Testis (tissue), 5 donors: ENCODE measurements at regions of chr3 and their contacts with region 1.

Region 1: DNA sequence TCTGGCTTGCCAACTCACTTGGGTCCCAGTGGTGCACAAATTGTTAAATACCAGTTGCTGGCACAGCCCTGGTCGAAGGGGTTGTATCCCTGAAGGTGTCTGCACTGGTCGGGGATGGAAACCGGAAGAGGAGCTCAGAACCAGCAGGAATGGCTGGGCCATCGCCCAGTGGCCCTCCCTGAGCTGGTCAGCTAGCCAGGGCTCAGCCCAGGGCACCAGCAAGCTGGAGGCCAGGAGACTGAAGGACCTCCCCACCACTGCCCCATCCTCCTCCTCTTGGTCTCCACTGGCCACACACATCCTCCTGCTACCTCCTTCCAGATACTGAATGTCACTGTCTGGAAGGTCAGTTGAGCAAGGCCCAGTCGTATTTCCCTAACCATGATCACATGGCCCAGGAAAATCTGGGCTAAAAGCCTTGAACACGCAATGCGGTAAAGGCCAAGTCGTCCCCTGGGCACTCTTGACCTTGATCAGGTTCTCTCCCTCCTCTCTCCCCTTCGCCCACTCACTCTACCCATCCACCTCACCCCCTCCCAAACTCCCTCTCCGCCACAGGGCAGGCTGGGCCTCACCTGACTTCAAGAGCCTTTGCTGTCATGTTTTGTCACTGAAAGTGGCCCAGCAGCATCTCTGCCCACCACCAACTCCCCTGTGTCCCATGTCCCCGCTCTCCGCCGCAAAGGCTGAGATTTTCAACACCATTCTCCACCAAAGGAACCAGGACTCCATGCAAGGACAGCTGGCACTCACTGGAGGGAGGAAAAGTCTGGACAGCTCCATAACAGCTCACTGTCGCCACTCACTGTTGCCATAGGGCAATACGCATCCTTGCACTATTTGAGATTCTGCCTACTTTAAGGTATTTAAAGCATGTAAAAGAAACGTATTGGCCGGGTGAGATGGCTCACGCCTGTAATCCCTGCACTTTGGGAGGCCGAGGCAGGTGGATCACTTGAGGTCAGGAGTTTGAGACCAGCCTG is 12.1 kb downstream of the ZDHHC19 start:
- DNase-seq: no peak
- H3K4me3 ChIP-seq: no peak overlapping the region
- H3K27ac ChIP-seq: peak overlapping the region; percentile 39 to 61
- H3K4me1 ChIP-seq: peaks cover 27% of the 10 kb centered on the region
- H3K27me3 ChIP-seq: no peaks in the 10 kb centered on the region
- CTCF ChIP-seq: no peak
- POLR2A ChIP-seq: no peak

Region 2: DNA sequence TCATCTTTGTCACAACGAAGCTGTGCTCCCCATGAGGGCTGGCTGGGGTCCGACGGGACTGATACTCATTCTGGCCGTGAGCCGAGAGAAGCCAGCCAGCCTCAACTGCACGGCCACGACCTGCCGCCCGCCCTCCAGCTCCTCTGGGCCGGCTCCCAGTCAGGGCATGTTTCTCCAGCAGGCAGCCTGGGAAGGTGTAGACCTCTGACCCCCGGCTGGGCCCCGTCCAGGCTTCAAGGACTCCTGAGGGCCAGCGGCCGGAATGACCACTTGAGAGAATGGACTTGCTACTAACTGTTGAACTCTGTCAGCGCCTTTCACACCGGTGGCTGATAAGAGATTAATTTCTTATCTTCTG is 369.2 kb before region 1 on chr3:
- intact Hi-C with region 1: no loop called
- DNase-seq: no peak
- H3K4me3 ChIP-seq: no peak overlapping the region
- H3K27ac ChIP-seq: no peak overlapping the region
- H3K4me1 ChIP-seq: no peaks in the 10 kb centered on the region
- H3K27me3 ChIP-seq: no peaks in the 10 kb centered on the region
- CTCF ChIP-seq: no peak
- POLR2A ChIP-seq: no peak

Region 3: GRCh38 chr3:196079682-196080081 is 119.4 kb before region 1 on chr3:
- intact Hi-C with region 1: loop called (anchors 5 kb)
- DNase-seq: no peak
- H3K4me3 ChIP-seq: no peak overlapping the region
- H3K27ac ChIP-seq: no peak overlapping the region
- H3K4me1 ChIP-seq: peaks cover 18% of the 10 kb centered on the region
- H3K27me3 ChIP-seq: no peaks in the 10 kb centered on the region
- CTCF ChIP-seq: no peak
- POLR2A ChIP-seq: no peak

Region 4: DNA sequence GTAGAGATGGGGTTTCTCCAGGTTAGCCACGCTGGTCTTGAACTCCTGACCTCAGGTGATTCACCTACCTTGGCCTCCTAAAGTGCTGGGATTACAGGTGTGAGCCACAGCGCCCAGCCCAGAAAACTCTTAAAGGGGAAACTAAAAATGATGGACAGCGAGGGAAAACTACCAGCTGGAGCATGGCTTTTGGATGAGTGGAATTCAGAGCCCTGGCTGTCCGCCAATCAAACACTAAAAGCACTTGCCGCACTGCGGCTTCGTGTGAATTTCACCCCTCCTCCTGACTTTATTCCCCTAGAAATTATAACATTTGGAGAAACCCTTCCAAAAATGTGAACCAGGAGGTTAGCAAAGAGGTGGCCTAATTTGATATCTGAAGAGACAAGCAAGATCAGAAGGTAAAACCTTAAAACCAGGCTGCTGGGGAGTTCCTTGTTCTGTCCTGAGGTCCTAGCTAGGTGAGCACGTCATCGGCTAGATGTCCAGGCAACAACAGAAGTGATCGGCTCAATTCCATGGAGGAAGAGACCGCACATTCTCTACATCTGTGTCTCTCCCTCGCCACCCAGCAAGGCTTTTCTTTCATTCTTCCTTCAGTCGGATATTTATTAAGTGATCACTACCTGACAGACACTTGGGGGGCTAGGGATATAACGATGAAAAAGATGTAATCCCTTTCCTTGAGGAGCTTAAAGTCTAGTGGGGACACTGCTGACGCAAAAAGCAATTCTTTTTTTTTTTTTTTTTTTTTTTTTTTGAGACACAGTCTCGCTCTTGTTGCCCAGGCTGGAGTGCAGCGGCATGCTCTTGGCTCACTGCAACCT is 137.5 kb after region 1 on chr3:
- intact Hi-C with region 1: no loop called
- DNase-seq: no peak
- H3K4me3 ChIP-seq: peak overlapping the region; percentile 15 to 49
- H3K27ac ChIP-seq: no peak overlapping the region
- H3K4me1 ChIP-seq: no peaks in the 10 kb centered on the region
- H3K27me3 ChIP-seq: no peaks in the 10 kb centered on the region
- CTCF ChIP-seq: no peak
- POLR2A ChIP-seq: no peak

Region 5: GRCh38 chr3:196454935-196455334 is 255.9 kb after region 1 on chr3:
- intact Hi-C with region 1: no loop called
- DNase-seq: no peak
- H3K4me3 ChIP-seq: no peak overlapping the region
- H3K27ac ChIP-seq: no peak overlapping the region
- H3K4me1 ChIP-seq: no peaks in the 10 kb centered on the region
- H3K27me3 ChIP-seq: no peaks in the 10 kb centered on the region
- CTCF ChIP-seq: no peak
- POLR2A ChIP-seq: no peak